Natural killer cell (primary cell): ENCODE measurements at regions of chr19 and their contacts with region 1.

Region 1: DNA sequence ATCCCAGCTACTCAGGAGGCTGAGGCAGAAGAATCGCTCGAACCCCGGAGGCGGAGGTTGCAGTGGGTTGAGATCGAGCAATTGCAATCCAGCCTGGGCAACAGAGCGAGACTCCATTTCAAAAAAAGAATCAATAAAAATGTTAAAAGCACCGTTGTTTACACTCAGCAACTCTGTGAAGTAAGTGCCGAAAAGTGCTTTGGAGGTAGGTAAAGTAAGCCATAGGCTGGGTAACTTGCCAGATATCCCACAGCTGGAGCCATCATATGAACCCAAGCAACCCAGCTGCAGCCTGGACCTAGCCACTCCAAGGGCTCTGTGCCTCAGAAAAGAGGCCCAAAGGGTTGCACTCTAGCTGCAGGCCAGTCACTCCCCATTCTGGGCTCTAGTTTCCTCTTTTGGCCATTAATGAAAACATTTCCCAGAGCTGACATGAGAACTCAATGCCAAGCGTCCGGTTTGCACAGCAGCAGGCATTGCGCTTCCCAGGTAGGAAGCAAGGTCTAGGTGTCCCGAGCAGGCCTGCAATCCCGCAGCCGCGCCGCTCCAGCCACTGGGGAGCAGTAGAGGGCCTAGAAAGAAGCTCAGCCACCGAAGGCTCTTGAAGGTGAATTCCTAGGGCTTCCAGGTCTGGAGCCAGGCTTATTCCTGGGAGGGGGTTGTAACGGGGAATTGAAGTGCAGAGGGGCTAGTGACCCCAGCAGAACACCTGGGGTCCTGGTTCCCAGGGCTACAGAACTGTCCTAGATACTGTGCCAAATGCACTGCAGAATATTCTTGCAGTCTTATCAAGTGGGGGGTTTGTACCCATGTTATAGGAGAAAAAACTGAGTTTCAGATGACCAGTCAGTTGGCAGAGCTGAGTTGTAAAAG is 4.1 kb upstream of the CD79A start:
- DNase-seq: peak; percentile 68 to 81
- ATAC-seq: peak in 1 of 3 donors; percentile 19
- H3K4me3 ChIP-seq: no peak overlapping the region
- H3K4me3 Mint-ChIP-seq: peak overlapping the region; percentile 76
- H3K27ac ChIP-seq: peak overlapping the region; percentile 79
- H3K27ac Mint-ChIP-seq: peak overlapping the region; percentile 95 to 97
- H3K4me1 ChIP-seq: peaks cover 100% of the 10 kb centered on the region
- H3K4me1 Mint-ChIP-seq: peaks cover 39 to 64% of the 10 kb centered on the region in 2 donors
- H3K27me3 ChIP-seq: no peaks in the 10 kb centered on the region
- H3K27me3 Mint-ChIP-seq: no peaks in the 10 kb centered on the region
- CTCF ChIP-seq: peak; percentile 82

Region 2: DNA sequence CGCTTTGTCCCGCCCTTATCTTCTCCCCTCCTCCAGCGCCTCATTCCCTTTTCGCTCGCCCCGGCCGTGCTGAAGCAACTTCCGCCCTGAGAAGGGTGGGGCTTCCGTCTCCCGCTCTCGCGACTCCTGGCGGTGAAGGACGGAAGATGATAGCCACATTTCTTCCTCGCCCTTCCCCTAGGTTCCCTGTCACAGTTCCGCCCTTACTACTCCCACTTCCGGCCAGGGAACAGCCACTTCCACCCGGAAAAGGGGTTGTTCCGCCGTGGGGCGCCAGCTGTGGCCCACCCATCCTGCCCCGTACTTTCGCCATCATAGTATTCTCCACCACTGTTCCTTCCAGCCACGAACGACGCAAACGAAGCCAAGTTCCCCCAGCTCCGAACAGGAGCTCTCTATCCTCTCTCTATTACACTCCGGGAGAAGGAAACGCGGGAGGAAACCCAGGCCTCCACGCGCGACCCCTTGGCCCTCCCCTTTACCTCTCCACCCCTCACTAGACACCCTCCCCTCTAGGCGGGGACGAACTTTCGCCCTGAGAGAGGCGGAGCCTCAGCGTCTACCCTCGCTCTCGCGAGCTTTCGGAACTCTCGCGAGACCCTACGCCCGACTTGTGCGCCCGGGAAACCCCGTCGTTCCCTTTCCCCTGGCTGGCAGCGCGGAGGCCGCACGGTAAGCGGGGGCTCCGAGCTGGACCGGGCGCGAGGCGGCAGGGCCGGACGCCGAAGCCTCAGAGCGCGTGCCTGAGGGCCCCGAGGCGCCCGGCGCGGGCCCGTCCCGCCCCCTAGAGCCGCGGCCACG is 13.2 kb before region 1 on chr19 and contains the start of gene RPS19:
- intact Hi-C with region 1: loop called (anchors 1 kb)
- DNase-seq: peak; percentile 98 to 99
- ATAC-seq: peak; percentile 86 to 95 (median 86)
- H3K4me3 ChIP-seq: peak within 1 kb of the TSS; percentile 82
- H3K4me3 Mint-ChIP-seq: peak within 1 kb of the TSS; percentile 95
- H3K27ac ChIP-seq: peak within 1 kb of the TSS; percentile 92
- H3K27ac Mint-ChIP-seq: peak within 1 kb of the TSS; percentile 94 to 96
- H3K4me1 ChIP-seq: peaks cover 48% of the 10 kb centered on the region
- H3K4me1 Mint-ChIP-seq: peaks cover 35 to 52% of the 10 kb centered on the region in 2 donors
- H3K27me3 ChIP-seq: no peaks in the 10 kb centered on the region
- H3K27me3 Mint-ChIP-seq: no peaks in the 10 kb centered on the region
- CTCF ChIP-seq: peak; percentile 72
- total RNA-seq, gene RPS19: 1,358 to 1,814 (median 1,709) TPM

Region 3: DNA sequence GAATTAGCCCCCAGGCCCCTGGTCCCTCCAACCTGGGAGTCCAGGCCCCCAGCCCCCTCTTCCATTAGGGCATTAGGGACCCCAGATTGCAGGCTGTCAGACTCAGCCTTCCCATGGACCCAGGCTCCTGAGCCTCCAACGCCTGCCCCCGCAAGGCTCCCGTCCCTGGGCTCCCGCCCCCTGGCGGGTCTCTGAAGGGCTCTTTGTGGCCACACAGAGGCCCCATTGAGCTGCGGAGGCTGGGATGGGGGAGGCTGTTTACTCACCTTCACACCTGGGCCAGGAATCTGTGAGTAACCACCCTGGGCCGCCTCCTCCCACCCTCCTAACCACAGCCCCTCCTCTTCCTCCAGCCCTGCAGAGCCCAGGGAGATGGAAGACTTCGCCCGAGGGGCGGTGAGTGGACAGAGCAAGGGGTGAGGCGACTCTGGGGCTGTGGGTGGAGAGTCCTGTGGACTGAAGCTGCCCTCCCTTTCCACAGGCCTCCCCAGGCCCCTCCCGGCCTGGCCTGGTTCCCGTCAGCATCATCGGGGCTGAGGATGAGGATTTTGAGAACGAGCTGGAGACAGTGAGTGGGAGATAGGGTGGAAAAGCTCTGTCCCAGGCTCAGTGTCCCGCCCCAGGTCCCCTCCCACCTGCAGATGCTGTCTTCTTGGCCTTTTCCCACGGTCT is 14.8 kb after region 1 on chr19:
- intact Hi-C with region 1: loop called (anchors 1 kb)
- DNase-seq: peak; percentile 75 to 90
- ATAC-seq: peak; percentile 25 to 34 (median 27)
- H3K4me3 ChIP-seq: peak overlapping the region; percentile 56
- H3K4me3 Mint-ChIP-seq: peak overlapping the region; percentile 84
- H3K27ac ChIP-seq: peak overlapping the region; percentile 92
- H3K27ac Mint-ChIP-seq: peak overlapping the region; percentile 84 to 89
- H3K4me1 ChIP-seq: peaks cover 85% of the 10 kb centered on the region
- H3K4me1 Mint-ChIP-seq: peaks cover 61 to 83% of the 10 kb centered on the region in 2 donors
- H3K27me3 ChIP-seq: no peaks in the 10 kb centered on the region
- H3K27me3 Mint-ChIP-seq: no peaks in the 10 kb centered on the region
- CTCF ChIP-seq: no peak

Region 4: DNA sequence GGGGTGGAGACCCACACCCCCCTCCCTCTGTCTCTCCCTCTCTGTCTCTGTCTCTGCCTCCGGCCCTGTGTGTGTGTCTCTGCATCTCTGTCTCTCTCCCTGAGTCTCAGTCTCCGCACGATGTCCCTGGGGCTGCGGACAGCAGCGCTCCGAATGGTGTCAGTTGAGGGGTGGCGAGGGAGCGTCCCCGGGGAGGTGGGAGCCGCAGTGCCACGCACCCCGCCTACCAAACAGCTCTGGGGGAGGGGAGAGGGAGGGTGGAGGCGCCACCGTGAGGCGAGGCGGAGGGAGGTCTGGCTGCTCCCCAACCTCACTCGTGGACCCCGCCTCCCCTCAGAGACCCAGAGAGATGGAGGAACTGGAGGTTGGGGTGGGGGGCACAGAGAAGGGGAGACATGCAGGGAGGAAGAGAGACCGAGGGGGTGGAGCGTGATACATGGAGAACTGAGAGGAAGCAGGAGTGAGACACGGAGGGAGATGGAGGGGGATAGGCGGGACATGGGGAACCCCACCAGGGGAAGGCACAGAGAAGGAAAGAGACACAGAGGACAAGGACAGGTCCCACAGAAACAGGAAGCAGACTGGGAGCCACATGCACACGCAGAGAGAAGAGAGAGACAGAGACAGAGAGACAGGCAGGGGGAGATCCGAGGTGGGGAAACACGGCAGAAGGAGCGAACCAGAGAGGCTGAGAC is 48.0 kb after region 1 on chr19:
- intact Hi-C with region 1: no loop called
- DNase-seq: no peak
- ATAC-seq: peak in 2 of 3 donors; percentile 36 to 38
- H3K4me3 ChIP-seq: no peak overlapping the region
- H3K4me3 Mint-ChIP-seq: peak overlapping the region; percentile 2
- H3K27ac ChIP-seq: no peak overlapping the region
- H3K27ac Mint-ChIP-seq: no peak overlapping the region
- H3K4me1 ChIP-seq: peaks cover 15% of the 10 kb centered on the region
- H3K4me1 Mint-ChIP-seq: peaks cover 10 to 23% of the 10 kb centered on the region in 2 donors
- H3K27me3 ChIP-seq: peaks cover 42% of the 10 kb centered on the region
- H3K27me3 Mint-ChIP-seq: peaks cover 14 to 21% of the 10 kb centered on the region in 2 donors
- CTCF ChIP-seq: no peak

Region 5: DNA sequence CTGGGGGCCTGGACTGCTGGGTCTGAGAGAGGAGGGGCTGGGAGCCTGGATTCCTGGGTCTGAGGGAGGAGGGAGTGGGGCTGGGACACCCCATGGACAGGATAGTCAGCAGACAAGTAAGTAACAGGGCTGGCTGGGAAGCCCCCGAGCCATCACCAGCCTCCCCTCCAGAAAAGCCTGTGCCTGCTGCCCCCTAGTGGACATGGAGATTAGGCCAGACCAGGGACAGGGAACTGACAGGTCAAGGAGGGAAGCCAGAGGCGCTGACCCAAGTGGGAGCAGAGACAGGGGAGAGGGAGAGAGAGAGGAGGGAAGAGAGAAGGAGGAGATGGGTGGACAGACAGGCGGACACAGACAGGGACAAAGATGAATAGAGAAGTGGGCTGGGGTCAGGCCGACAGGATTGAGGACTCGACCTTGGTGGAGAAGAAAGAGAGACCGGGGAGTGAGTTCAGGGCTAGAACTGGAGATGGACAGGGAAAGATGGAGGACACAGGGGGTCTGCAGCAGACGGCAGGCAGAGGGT is 61.9 kb after region 1 on chr19:
- intact Hi-C with region 1: loop called (anchors 1 kb)
- DNase-seq: peak; percentile 77 to 90
- ATAC-seq: peak; percentile 78 to 84 (median 80)
- H3K4me3 ChIP-seq: no peak overlapping the region
- H3K4me3 Mint-ChIP-seq: no peak overlapping the region
- H3K27ac ChIP-seq: no peak overlapping the region
- H3K27ac Mint-ChIP-seq: peak overlapping the region; percentile 69 to 90
- H3K4me1 ChIP-seq: peaks cover 51% of the 10 kb centered on the region
- H3K4me1 Mint-ChIP-seq: peaks cover 35 to 60% of the 10 kb centered on the region in 2 donors
- H3K27me3 ChIP-seq: peaks cover 15% of the 10 kb centered on the region
- H3K27me3 Mint-ChIP-seq: peaks cover 12 to 24% of the 10 kb centered on the region in 2 donors
- CTCF ChIP-seq: peak; percentile 88

Region 6: DNA sequence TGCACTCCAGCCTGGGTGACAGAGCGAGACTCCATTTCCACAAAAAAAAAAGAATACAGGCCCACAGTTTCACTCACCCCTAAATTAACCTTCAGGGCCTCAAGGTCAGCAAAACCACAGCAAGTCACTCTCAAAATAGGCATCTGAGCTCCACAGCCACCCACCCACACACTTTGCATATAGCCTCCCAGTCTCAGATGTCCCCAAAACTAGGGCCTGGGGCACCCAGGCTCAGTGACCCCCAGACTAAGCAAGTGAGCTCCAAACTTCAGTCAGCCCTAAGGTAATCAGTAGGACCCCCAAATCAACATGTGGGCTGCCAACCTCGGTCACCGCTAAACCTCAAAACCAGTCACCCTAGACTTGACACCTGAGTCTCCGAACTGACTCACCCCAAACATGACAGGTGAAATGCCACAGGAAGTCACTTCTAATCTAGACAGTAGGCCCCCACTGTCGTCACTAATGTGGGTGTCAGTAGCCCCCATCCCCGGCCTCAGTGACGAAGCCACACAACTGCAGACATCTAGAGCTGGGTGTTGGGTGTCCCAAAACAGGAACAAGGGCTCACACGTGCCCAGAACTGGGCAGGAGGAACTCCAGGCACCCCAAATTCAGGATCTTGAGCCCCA is 72.2 kb after region 1 on chr19:
- intact Hi-C with region 1: loop called (anchors 1 kb)
- DNase-seq: peak; percentile 88 to 95
- ATAC-seq: peak; percentile 79 to 92 (median 90)
- H3K4me3 ChIP-seq: no peak overlapping the region
- H3K4me3 Mint-ChIP-seq: peak overlapping the region; percentile 72
- H3K27ac ChIP-seq: peak overlapping the region; percentile 81
- H3K27ac Mint-ChIP-seq: peak overlapping the region; percentile 93 to 97
- H3K4me1 ChIP-seq: peaks cover 55% of the 10 kb centered on the region
- H3K4me1 Mint-ChIP-seq: peaks cover 44 to 64% of the 10 kb centered on the region in 2 donors
- H3K27me3 ChIP-seq: peaks cover 7% of the 10 kb centered on the region
- H3K27me3 Mint-ChIP-seq: peaks cover 14 to 17% of the 10 kb centered on the region in 2 donors
- CTCF ChIP-seq: no peak

Region 7: GRCh38 chr19:41951686-41952172 is 78.7 kb after region 1 on chr19:
- intact Hi-C with region 1: loop called (anchors 1 kb)
- DNase-seq: peak; percentile 89 to 93
- ATAC-seq: peak; percentile 88 to 96 (median 95)
- H3K4me3 ChIP-seq: no peak overlapping the region
- H3K4me3 Mint-ChIP-seq: peak overlapping the region; percentile 9
- H3K27ac ChIP-seq: no peak overlapping the region
- H3K27ac Mint-ChIP-seq: peak overlapping the region in 1 of 2 donors; percentile 81
- H3K4me1 ChIP-seq: peaks cover 21% of the 10 kb centered on the region
- H3K4me1 Mint-ChIP-seq: peaks cover 18 to 24% of the 10 kb centered on the region in 2 donors
- H3K27me3 ChIP-seq: no peaks in the 10 kb centered on the region
- H3K27me3 Mint-ChIP-seq: no peaks in the 10 kb centered on the region
- CTCF ChIP-seq: peak; percentile 99